PC-9 (cell line): ENCODE measurements at regions of chr21 and their contacts with region 1.

Region 1: GRCh38 chr21:34888569-34889319 is 160.4 kb downstream of the RUNX1 start:
- DNase-seq: peak; percentile 78 to 91
- H3K4me3 ChIP-seq: peak overlapping the region; percentile 97
- H3K27ac ChIP-seq: peak overlapping the region; percentile 99
- H3K4me1 ChIP-seq: peaks cover 1% of the 10 kb centered on the region; the same call in 1 of the 2 replicates
- H3K27me3 ChIP-seq: no peaks in the 10 kb centered on the region
- CTCF ChIP-seq: no peak

Region 2: DNA sequence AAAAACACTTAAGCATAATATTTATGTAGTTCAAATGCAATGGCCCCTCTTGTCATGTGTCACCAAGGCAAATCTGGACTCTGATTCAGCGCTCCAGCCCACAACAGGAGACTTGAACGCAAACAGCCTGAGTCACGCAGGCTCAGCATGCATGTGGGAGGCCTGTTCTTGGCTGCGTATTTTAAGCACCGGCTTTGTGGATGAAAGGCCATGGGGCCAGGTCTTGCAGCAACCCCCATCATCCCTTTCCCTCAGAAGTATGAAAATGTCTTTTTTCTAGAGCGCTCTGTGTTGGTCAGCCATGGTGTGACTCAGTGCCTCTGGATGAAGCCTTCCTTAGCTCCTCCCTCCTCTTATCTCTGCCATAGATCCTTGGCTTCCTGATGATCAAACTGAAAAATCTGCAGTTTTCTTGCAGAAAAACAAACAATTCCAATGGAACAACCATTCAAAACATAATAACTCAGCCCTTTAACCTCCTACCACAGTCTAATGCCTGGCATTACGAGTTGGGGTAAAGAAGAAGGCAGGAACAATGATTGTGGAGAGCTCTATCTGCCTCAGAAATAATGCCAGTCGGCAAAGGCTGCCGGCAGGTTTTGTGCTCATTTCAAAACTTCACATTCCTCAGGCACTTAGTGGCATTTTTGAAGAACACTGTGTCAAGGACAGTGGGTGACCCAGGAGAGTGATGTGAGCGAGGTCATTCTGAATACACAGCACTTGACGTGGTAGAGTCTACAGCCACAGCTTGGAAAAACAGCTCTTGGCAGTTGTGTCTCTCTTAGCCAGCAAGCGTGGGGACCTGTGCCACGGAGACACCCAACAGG is 52.4 kb before region 1 on chr21:
- CTCF ChIA-PET with region 1: interaction called, 4 read pairs
- POLR2A ChIA-PET with region 1: interaction called, 3 read pairs
- intact Hi-C with region 1: loop called (anchors 2 kb)
- DNase-seq: peak; percentile 83 to 96
- H3K4me3 ChIP-seq: peak overlapping the region; percentile 56
- H3K27ac ChIP-seq: peak overlapping the region; percentile 96
- H3K4me1 ChIP-seq: peaks cover 65% of the 10 kb centered on the region
- H3K27me3 ChIP-seq: no peaks in the 10 kb centered on the region
- CTCF ChIP-seq: no peak

Region 3: GRCh38 chr21:34967509-34968289 is 79.0 kb after region 1 on chr21:
- CTCF ChIA-PET with region 1: no interaction called
- POLR2A ChIA-PET with region 1: no interaction called
- intact Hi-C with region 1: loop called (anchors 5 kb)
- DNase-seq: peak; percentile 60 to 87
- H3K4me3 ChIP-seq: no peak overlapping the region
- H3K27ac ChIP-seq: peak overlapping the region; percentile 92
- H3K4me1 ChIP-seq: peaks cover 54% of the 10 kb centered on the region
- H3K27me3 ChIP-seq: no peaks in the 10 kb centered on the region
- CTCF ChIP-seq: no peak

Region 4: DNA sequence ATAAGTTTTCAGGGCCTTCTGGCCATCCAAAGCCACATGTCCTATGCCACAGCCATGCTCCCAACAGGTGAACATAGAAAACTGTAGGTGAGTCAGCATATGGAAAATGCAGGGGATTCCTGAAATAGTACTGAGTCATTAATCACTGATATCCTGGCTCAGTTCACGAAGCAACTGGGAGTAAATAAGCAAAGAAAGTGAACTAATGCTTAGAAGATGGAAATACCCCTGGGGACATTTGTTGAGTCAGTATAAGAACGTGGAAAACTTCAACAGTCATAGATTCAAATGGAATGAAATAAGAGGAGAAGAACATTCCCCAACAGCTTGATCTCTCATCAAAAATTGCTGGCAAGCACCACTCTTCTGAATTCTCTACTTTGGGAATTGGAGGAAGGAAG is 309.3 kb after region 1 on chr21:
- CTCF ChIA-PET with region 1: no interaction called
- POLR2A ChIA-PET with region 1: no interaction called
- intact Hi-C with region 1: loop called (anchors 1 kb)
- DNase-seq: peak; percentile 48 to 97
- H3K4me3 ChIP-seq: peak overlapping the region; percentile 22; the same call in 1 of the 2 replicates
- H3K27ac ChIP-seq: peak overlapping the region; percentile 100
- H3K4me1 ChIP-seq: peaks cover 48% of the 10 kb centered on the region
- H3K27me3 ChIP-seq: no peaks in the 10 kb centered on the region
- CTCF ChIP-seq: no peak

Region 5: DNA sequence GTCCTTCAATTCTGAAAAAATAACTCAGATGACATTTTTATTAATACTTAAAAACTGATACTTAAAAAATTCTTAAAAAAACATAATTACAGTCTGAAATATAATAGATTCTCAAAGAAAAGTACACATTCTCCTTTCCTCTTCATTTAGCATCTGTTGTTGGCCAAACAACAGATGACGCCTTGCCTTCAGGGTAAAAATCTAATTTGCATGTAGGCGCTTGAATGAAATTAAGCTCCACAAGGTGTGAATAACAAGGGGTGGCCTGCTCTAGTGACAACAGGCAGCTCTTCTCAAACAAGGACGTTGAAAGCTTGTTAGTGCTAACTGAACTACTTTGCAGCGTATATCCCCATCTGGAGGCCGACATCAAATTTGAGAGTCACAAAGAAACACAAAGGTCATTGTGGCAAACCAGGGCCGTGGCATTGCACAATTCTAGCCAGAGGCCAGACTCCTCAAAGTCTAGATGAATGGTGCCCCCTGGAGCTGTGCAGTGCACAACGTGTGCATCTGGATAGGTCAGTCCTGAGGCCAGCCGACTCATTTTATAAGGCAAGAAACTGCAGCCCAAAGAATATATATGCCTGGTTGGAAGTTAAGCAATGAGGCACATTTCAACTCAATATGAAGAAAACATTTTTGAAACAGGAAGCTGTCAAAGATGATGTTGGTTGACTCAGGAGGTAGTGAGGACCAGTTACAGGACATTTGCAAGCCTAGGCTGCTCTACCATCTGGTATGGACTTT is 619.6 kb after region 1 on chr21:
- CTCF ChIA-PET with region 1: no interaction called
- POLR2A ChIA-PET with region 1: no interaction called
- intact Hi-C with region 1: loop called (anchors 1 kb)
- DNase-seq: peak; percentile 61 to 85
- H3K4me3 ChIP-seq: no peak overlapping the region
- H3K27ac ChIP-seq: no peak overlapping the region; the same call in 1 of the 2 replicates
- H3K4me1 ChIP-seq: peaks cover 42% of the 10 kb centered on the region
- H3K27me3 ChIP-seq: no peaks in the 10 kb centered on the region
- CTCF ChIP-seq: peak; percentile 68